CD4-positive, alpha-beta memory T cell (primary cell): ENCODE measurements at regions of chr2 and their contacts with region 1.

Region 1: GRCh38 chr2:241702132-241703031 is 543 bp downstream of the ING5 start:
- DNase-seq: peak; percentile 89 to 91 (median 89)
- H3K4me3 ChIP-seq: peak overlapping the region; percentile 61 to 72
- H3K4me3 Mint-ChIP-seq: peak overlapping the region; percentile 76 to 87 (median 83)
- H3K27ac ChIP-seq: peak overlapping the region; percentile 72
- H3K27ac Mint-ChIP-seq: peak overlapping the region in 6 of 7 donors; percentile 53 to 90 (median 86)
- H3K4me1 ChIP-seq: peaks cover 14% of the 10 kb centered on the region
- H3K4me1 Mint-ChIP-seq: peaks cover 12 to 41% (median 26%) of the 10 kb centered on the region in 4 donors
- H3K27me3 ChIP-seq: no peaks in the 10 kb centered on the region
- H3K27me3 Mint-ChIP-seq: no peaks in the 10 kb centered on the region

Region 2: GRCh38 chr2:240832205-240832727 is 870.1 kb before region 1 on chr2:
- CTCF ChIA-PET with region 1: no interaction called
- POLR2A ChIA-PET with region 1: no interaction called
- intact Hi-C with region 1: loop called (anchors 1 kb)
- DNase-seq: peak; percentile 98 to 99 (median 99)
- H3K4me3 ChIP-seq: peak overlapping the region; percentile 34 to 36
- H3K4me3 Mint-ChIP-seq: peak overlapping the region in 6 of 8 donors; percentile 12 to 81 (median 66)
- H3K27ac ChIP-seq: no peak overlapping the region
- H3K27ac Mint-ChIP-seq: peak overlapping the region in 3 of 7 donors; percentile 55 to 91 (median 82)
- H3K4me1 ChIP-seq: peaks cover 12% of the 10 kb centered on the region
- H3K4me1 Mint-ChIP-seq: peaks cover 0 to 6% (median 3%) of the 10 kb centered on the region in 4 donors
- H3K27me3 ChIP-seq: peaks cover 10% of the 10 kb centered on the region
- H3K27me3 Mint-ChIP-seq: peaks cover 8 to 16% of the 10 kb centered on the region in 2 donors

Region 3: GRCh38 chr2:241102239-241102803 is 600.1 kb before region 1 on chr2 and contains the start of gene MTERF4:
- CTCF ChIA-PET with region 1: no interaction called
- POLR2A ChIA-PET with region 1: no interaction called
- intact Hi-C with region 1: no loop called
- DNase-seq: peak; percentile 85 to 88 (median 86)
- H3K4me3 ChIP-seq: peak within 1 kb of the TSS; percentile 92 to 94
- H3K4me3 Mint-ChIP-seq: peak within 1 kb of the TSS; percentile 94 to 98 (median 96)
- H3K27ac ChIP-seq: peak within 1 kb of the TSS; percentile 92
- H3K27ac Mint-ChIP-seq: peak within 1 kb of the TSS; percentile 97 to 99 (median 98)
- H3K4me1 ChIP-seq: peaks cover 88% of the 10 kb centered on the region
- H3K4me1 Mint-ChIP-seq: peaks cover 32 to 88% (median 62%) of the 10 kb centered on the region in 4 donors
- H3K27me3 ChIP-seq: no peaks in the 10 kb centered on the region
- H3K27me3 Mint-ChIP-seq: no peaks in the 10 kb centered on the region
- total RNA-seq, gene MTERF4: 204 to 227 TPM

Region 4: GRCh38 chr2:241508240-241509154 is 193.9 kb before region 1 on chr2 and contains the start of gene STK25:
- CTCF ChIA-PET with region 1: no interaction called
- POLR2A ChIA-PET with region 1: no interaction called
- intact Hi-C with region 1: loop called (anchors 1 kb)
- DNase-seq: peak; percentile 97 to 98 (median 98)
- H3K4me3 ChIP-seq: peak within 1 kb of the TSS; percentile 29 to 58
- H3K4me3 Mint-ChIP-seq: peak within 1 kb of the TSS; percentile 81 to 85 (median 83)
- H3K27ac ChIP-seq: peak within 1 kb of the TSS; percentile 82
- H3K27ac Mint-ChIP-seq: peak within 1 kb of the TSS; percentile 62 to 94 (median 75)
- H3K4me1 ChIP-seq: peaks cover 18% of the 10 kb centered on the region
- H3K4me1 Mint-ChIP-seq: peaks cover 11 to 41% (median 22%) of the 10 kb centered on the region in 4 donors
- H3K27me3 ChIP-seq: no peaks in the 10 kb centered on the region
- H3K27me3 Mint-ChIP-seq: no peaks in the 10 kb centered on the region
- total RNA-seq, gene STK25: 178 to 182 TPM

Region 5: GRCh38 chr2:241686649-241687425 is 15.5 kb before region 1 on chr2 and contains the start of gene DTYMK:
- CTCF ChIA-PET with region 1: interaction called, 42 read pairs
- POLR2A ChIA-PET with region 1: interaction called, 145 read pairs
- intact Hi-C with region 1: loop called (anchors 1 kb)
- DNase-seq: peak; percentile 95 to 98 (median 97)
- H3K4me3 ChIP-seq: peak within 1 kb of the TSS; percentile 57 to 89
- H3K4me3 Mint-ChIP-seq: peak within 1 kb of the TSS; percentile 87 to 96 (median 94)
- H3K27ac ChIP-seq: peak within 1 kb of the TSS; percentile 80
- H3K27ac Mint-ChIP-seq: peak within 1 kb of the TSS; percentile 85 to 93 (median 91)
- H3K4me1 ChIP-seq: peaks cover 32% of the 10 kb centered on the region
- H3K4me1 Mint-ChIP-seq: peaks cover 14 to 40% (median 26%) of the 10 kb centered on the region in 4 donors
- H3K27me3 ChIP-seq: no peaks in the 10 kb centered on the region
- H3K27me3 Mint-ChIP-seq: no peaks in the 10 kb centered on the region
- total RNA-seq, gene DTYMK: 18.8 TPM

Region 6: GRCh38 chr2:241734467-241735208 is 32.3 kb after region 1 on chr2 and contains the start of gene D2HGDH:
- CTCF ChIA-PET with region 1: interaction called, 36 read pairs
- POLR2A ChIA-PET with region 1: interaction called, 40 read pairs
- intact Hi-C with region 1: loop called (anchors 1 kb)
- DNase-seq: peak; percentile 89 to 95 (median 91)
- H3K4me3 ChIP-seq: peak within 1 kb of the TSS; percentile 34 to 93
- H3K4me3 Mint-ChIP-seq: peak within 1 kb of the TSS; percentile 79 to 89 (median 85)
- H3K27ac ChIP-seq: peak within 1 kb of the TSS; percentile 67
- H3K27ac Mint-ChIP-seq: peak within 1 kb of the TSS; percentile 57 to 90 (median 79)
- H3K4me1 ChIP-seq: peaks cover 17% of the 10 kb centered on the region
- H3K4me1 Mint-ChIP-seq: peaks cover 16 to 54% (median 30%) of the 10 kb centered on the region in 4 donors
- H3K27me3 ChIP-seq: no peaks in the 10 kb centered on the region
- H3K27me3 Mint-ChIP-seq: no peaks in the 10 kb centered on the region
- total RNA-seq, gene D2HGDH: 48.7 to 53.9 TPM

Region 7: GRCh38 chr2:241859436-241860183 is 157.2 kb after region 1 on chr2:
- CTCF ChIA-PET with region 1: interaction called, 4 read pairs
- POLR2A ChIA-PET with region 1: interaction called, 13 read pairs
- intact Hi-C with region 1: no loop called
- DNase-seq: peak; percentile 26 to 71 (median 39)
- H3K4me3 ChIP-seq: peak overlapping the region; percentile 23 to 68
- H3K4me3 Mint-ChIP-seq: peak overlapping the region; percentile 87 to 96 (median 90)
- H3K27ac ChIP-seq: peak overlapping the region; percentile 64
- H3K27ac Mint-ChIP-seq: peak overlapping the region; percentile 92 to 98 (median 96)
- H3K4me1 ChIP-seq: peaks cover 84% of the 10 kb centered on the region
- H3K4me1 Mint-ChIP-seq: peaks cover 37 to 79% (median 55%) of the 10 kb centered on the region in 4 donors
- H3K27me3 ChIP-seq: no peaks in the 10 kb centered on the region
- H3K27me3 Mint-ChIP-seq: peaks cover 0 to 2% of the 10 kb centered on the region in 2 donors

Region 8: GRCh38 chr2:241933179-241933911 is 231.0 kb after region 1 on chr2:
- CTCF ChIA-PET with region 1: no interaction called
- POLR2A ChIA-PET with region 1: no interaction called
- intact Hi-C with region 1: no loop called
- DNase-seq: no peak
- H3K4me3 ChIP-seq: no peak overlapping the region
- H3K4me3 Mint-ChIP-seq: peak overlapping the region in 1 of 8 donors; percentile 7
- H3K27ac ChIP-seq: no peak overlapping the region
- H3K27ac Mint-ChIP-seq: peak overlapping the region in 5 of 7 donors; percentile 24 to 62 (median 48)
- H3K4me1 ChIP-seq: peaks cover 10% of the 10 kb centered on the region
- H3K4me1 Mint-ChIP-seq: peaks cover 7 to 12% (median 11%) of the 10 kb centered on the region in 4 donors
- H3K27me3 ChIP-seq: no peaks in the 10 kb centered on the region
- H3K27me3 Mint-ChIP-seq: no peaks in the 10 kb centered on the region

Region 9: DNA sequence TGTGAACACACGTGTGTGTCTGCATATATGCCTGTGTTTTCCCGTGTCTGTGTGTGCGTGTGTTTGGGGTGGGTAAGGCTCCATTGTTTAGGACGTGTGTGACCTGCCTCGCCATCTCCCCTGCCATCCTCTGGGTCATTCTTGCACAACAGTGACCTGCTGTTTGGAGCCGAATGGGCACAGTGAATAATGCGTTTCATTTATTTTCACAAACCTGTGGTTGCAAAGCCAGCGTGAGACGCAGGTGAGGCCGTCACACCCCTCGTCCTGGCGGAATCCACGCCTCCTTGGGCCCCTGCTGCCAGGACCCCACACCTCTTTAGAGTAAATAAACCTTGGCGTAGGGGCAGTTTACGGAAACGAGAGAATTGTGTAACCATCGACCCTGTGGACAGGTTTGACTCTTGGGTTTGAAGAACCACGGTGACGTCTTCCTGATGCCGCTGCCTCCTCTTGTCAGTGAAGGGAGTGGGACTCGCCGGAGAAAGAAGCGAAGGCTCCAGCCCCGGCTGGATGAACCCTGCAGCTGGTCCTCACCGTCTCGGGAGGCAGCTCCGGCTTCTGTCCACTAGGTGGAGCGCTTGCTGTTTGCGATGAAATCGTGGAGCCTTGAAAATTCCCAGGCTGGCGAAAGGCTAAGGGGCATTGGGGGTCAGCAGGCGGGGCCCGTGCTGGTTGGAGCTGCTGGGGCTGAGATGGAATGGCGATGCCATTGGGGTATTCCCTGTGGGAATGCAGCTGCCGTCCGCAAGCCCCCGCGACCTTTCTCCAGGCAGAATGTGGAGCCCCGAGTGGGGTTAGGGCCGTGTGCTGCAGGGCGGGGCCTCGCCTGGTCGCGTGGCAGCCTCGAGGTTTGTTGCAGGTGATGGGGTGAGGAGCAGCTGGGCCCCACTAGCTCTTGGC is 248.3 kb after region 1 on chr2:
- CTCF ChIA-PET with region 1: no interaction called
- POLR2A ChIA-PET with region 1: no interaction called
- intact Hi-C with region 1: no loop called
- DNase-seq: peak in 4 of 5 donors; percentile 32 to 57 (median 39)
- H3K4me3 ChIP-seq: no peak overlapping the region
- H3K4me3 Mint-ChIP-seq: no peak overlapping the region
- H3K27ac ChIP-seq: no peak overlapping the region
- H3K27ac Mint-ChIP-seq: no peak overlapping the region
- H3K4me1 ChIP-seq: no peaks in the 10 kb centered on the region
- H3K4me1 Mint-ChIP-seq: peaks cover 7 to 13% (median 12%) of the 10 kb centered on the region in 4 donors
- H3K27me3 ChIP-seq: no peaks in the 10 kb centered on the region
- H3K27me3 Mint-ChIP-seq: no peaks in the 10 kb centered on the region